ENCODE measurements at regions of chr7 and their contacts with region 1.

Region 1: DNA sequence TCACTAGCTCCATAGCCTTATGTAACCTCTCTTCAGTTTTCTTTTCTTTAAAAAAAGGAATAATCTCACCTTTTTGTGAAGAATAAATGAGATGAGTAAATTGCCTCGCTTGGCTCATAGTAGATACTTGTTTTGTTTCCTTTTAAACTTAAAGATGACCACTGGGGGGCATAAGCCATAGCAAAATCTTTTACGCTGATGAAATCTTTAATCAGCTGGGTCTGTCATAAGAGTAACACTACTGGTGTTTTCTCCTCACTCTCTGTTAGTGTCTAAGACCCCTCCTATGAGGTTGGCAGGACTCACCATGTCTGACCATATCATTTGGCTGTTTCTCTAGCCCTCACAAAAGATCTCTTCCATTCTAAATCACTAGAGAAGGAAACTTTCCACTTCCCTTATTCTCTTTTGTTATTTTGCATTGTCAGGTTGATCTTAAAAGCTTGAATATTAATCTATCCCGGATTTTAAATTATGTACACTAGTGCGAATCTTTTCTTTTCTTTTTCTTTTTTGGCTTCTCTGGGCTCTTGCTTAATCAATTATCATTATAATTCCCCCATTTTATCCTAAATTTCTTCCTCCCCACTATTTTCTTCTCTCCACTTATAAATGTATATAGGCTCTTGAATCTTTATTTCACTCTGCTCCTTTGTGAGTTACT is 12.5 kb downstream of the STAG3 start:
- DNase-seq: no peak
- ATAC-seq: peak; percentile 81
- H3K4me3 Mint-ChIP-seq: no peak overlapping the region
- H3K27ac Mint-ChIP-seq: peak overlapping the region; percentile 75
- H3K4me1 Mint-ChIP-seq: peaks cover 31% of the 10 kb centered on the region
- H3K27me3 Mint-ChIP-seq: no peaks in the 10 kb centered on the region

Region 2: GRCh38 chr7:100081535-100082102 is 108.6 kb before region 1 on chr7 and contains the start of gene ZNF3:
- CTCF ChIA-PET with region 1: no interaction called
- POLR2A ChIA-PET with region 1: no interaction called
- DNase-seq: peak; percentile 99
- ATAC-seq: peak; percentile 91
- H3K4me3 Mint-ChIP-seq: peak within 1 kb of the TSS; percentile 83
- H3K27ac Mint-ChIP-seq: peak within 1 kb of the TSS; percentile 90
- H3K4me1 Mint-ChIP-seq: peaks cover 25% of the 10 kb centered on the region
- H3K27me3 Mint-ChIP-seq: peaks cover 3% of the 10 kb centered on the region
- total RNA-seq, gene ZNF3: 20.9 to 21.8 TPM

Region 3: DNA sequence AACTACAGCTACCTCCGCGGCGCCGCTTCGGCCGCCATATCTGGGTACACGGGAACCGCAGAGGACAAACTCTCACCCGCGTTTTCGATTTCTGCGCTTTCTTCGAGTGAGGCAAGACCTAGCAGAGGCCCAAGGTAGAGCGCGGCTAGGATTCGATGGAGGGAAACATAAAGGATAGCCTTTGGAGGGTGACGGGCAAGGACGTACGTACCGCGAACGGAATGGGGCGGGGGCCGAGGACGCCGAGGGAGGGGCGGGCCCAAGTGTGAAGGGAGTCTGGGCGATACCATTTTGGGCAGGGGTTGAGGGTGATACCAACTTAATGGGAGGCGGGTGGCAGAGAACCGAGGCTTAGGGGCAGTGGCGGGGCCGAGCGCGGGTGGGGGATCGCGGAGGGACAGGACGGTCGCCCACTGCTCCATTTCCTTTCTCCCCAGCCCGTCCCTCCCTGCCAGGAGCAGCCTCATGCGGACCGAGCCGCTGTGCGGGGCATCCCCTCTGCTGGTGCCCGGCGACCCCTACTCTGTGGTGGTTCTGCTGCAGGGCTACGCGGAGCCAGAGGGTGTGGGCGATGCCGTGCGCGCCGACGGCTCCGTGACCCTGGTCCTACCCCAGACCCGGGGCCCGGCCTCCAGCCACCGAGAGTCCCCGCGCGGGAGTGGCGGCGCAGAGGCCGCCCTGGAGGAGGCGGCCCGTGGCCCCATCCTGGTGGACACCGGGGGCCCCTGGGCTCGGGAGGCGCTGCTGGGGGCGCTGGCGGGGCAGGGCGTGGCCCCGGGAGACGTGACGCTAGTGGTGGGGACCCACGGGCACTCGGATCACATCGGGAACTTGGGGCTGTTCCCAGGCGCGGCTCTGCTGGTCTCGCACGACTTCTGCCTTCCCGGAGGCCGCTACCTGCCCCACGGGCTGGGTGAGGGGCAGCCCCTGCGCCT is 63.0 kb before region 1 on chr7 and contains the start of gene MBLAC1:
- CTCF ChIA-PET with region 1: interaction called, 65 read pairs
- POLR2A ChIA-PET with region 1: no interaction called
- DNase-seq: peak; percentile 95
- ATAC-seq: peak; percentile 72
- H3K4me3 Mint-ChIP-seq: peak within 1 kb of the TSS; percentile 98
- H3K27ac Mint-ChIP-seq: peak within 1 kb of the TSS; percentile 100
- H3K4me1 Mint-ChIP-seq: peaks cover 49% of the 10 kb centered on the region
- H3K27me3 Mint-ChIP-seq: no peaks in the 10 kb centered on the region
- total RNA-seq, gene MBLAC1: 4.3 to 5.7 TPM

Region 4: GRCh38 chr7:100177045-100178001 is 12.9 kb before region 1 on chr7 and contains the starts of genes GPC2 and STAG3:
- CTCF ChIA-PET with region 1: interaction called, 51 read pairs
- POLR2A ChIA-PET with region 1: interaction called, 5 read pairs
- DNase-seq: peak; percentile 99
- ATAC-seq: peak; percentile 91
- H3K4me3 Mint-ChIP-seq: peak within 1 kb of the TSS; percentile 77
- H3K27ac Mint-ChIP-seq: peak within 1 kb of the TSS; percentile 75
- H3K4me1 Mint-ChIP-seq: peaks cover 48% of the 10 kb centered on the region
- H3K27me3 Mint-ChIP-seq: peaks cover 18% of the 10 kb centered on the region
- total RNA-seq, gene GPC2: 8.1 to 8.2 TPM
- total RNA-seq, gene STAG3: 16.5 to 20.6 TPM

Region 5: DNA sequence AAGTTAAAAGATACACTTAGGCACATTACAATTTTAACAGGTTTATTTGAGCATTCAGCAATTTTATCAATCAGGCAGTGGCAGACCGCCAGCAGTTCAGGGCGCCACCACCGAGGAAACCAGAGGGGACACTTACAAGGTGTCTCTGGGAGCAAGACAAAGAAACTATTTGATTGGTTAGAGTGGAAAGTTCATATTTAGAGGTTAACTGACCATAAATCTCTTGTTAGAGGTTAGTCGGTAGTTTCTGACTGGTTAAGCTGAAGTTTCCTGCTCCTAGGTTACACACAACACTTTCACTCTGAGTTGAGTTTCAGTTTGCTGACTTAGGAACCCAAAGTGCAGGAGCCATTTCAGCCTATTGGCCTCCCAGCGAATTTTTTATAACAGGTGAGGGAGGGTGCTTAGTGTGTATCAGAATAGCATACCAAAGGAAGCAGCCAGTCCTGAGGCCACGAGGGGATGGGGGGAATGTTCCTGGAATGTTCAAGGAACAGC is 18.8 kb after region 1 on chr7:
- CTCF ChIA-PET with region 1: interaction called, 102 read pairs
- POLR2A ChIA-PET with region 1: interaction called, 4 read pairs
- DNase-seq: peak; percentile 78
- ATAC-seq: peak; percentile 88
- H3K4me3 Mint-ChIP-seq: peak overlapping the region; percentile 62
- H3K27ac Mint-ChIP-seq: peak overlapping the region; percentile 80
- H3K4me1 Mint-ChIP-seq: peaks cover 53% of the 10 kb centered on the region
- H3K27me3 Mint-ChIP-seq: no peaks in the 10 kb centered on the region

Region 6: GRCh38 chr7:100221231-100221718 is 31.1 kb after region 1 on chr7:
- CTCF ChIA-PET with region 1: interaction called, 52 read pairs
- POLR2A ChIA-PET with region 1: interaction called, 14 read pairs
- DNase-seq: peak; percentile 83
- ATAC-seq: peak; percentile 50
- H3K4me3 Mint-ChIP-seq: peak overlapping the region; percentile 95
- H3K27ac Mint-ChIP-seq: peak overlapping the region; percentile 98
- H3K4me1 Mint-ChIP-seq: peaks cover 65% of the 10 kb centered on the region
- H3K27me3 Mint-ChIP-seq: no peaks in the 10 kb centered on the region

Region 7: DNA sequence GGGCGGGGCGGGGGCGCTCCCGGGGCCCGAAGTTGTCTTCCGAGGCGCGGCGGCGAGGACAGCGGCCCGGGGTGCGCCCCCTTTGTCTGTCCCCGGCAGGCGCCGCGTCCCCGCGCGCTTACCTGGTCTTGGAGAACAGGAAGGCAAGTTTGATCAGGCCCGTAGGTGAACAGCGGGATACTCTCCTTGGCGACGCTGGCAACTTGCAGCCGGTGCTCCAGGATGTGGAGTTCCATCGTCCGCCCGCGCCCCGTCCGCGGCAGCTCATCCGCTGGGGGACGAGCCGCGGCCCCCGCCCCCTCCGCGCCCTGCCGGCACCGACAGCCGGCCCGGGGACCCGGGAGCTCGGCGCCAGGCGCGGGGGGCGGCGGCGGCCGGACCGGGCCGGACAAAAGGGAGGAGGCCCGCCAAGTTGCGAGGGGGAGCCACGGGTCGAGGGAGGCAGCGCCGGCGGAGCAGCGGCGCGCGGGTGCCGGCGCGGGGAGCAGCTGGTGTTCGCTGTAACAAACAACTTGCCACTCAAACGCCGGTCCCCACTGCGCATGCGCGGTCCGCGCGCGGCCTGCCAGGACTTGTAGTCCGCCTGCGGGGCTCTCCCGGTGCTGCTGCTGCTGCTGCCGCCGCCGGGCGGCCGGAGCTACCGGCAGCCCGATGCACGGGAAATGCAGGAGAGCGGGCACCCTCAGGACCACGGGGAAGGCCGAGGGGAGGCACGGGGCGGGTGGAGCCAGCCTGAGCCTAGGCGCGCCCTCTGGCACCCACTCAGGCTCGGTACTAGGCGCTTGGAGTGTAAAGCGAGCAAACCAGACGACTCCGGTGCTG is 81.7 kb after region 1 on chr7:
- CTCF ChIA-PET with region 1: no interaction called
- POLR2A ChIA-PET with region 1: no interaction called
- DNase-seq: peak; percentile 99
- ATAC-seq: peak; percentile 95
- H3K4me3 Mint-ChIP-seq: peak overlapping the region; percentile 73
- H3K27ac Mint-ChIP-seq: peak overlapping the region; percentile 69
- H3K4me1 Mint-ChIP-seq: peaks cover 22% of the 10 kb centered on the region
- H3K27me3 Mint-ChIP-seq: no peaks in the 10 kb centered on the region